ENCODE measurements at regions of chr2 and their contacts with region 1.

Region 1: GRCh38 chr2:56749152-56749752 is 565.5 kb downstream of the CCDC85A start:
- DNase-seq: no peak
- H3K4me3 ChIP-seq: no peak overlapping the region
- H3K27ac ChIP-seq: no peak overlapping the region
- H3K4me1 ChIP-seq: no peaks in the 10 kb centered on the region
- H3K27me3 ChIP-seq: no peaks in the 10 kb centered on the region
- CTCF ChIP-seq: peak; percentile 49 to 50

Region 2: DNA sequence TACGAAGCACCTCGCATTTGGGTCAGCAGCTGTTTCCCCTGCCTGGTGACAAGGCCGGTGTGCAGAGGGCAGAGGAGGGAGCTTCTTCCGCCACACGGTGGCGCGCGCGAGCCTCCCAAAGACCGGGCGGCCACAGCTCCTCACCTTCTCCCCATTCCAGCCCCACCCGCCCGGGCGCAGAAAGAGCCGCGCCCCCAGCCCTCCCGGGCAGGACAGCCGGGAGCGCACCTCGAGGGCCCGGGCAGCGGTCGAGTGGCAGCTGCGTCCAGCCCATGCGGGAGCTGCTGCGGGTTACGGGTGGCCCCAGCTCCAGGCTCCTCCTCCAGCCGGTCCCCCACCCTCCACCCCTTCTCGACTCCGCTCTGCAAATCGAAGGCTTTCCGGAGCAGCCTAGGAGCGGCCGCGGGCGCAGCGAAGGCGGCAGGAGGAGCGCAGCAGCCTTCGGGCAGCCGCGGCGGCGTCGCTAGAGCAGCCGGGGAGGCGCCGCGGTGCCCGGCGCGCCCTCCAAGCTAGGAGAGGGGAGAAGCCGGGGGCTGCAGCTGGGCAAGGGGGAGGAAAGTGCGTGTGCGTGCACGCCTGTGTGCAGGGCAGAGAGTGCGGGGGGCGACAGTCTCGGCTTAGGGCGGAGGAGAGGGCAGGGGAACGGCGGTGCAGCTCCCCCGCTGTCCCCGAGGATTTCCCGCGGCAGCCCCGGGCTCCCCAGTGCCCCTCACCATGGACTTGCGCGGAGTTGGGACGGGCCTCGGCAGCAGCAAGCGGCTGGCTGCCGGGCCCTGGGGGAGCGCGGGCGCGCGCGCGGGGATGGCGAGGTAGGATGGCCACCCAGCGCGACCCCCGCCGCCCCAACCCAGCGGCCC is 565.4 kb before region 1 on chr2 and contains the start of gene CCDC85A:
- intact Hi-C with region 1: loop called (anchors 5 kb)
- DNase-seq: peak; percentile 83 to 88
- H3K4me3 ChIP-seq: peak within 1 kb of the TSS; percentile 55 to 66
- H3K27ac ChIP-seq: peak within 1 kb of the TSS in 1 of 2 donors; percentile 23
- H3K4me1 ChIP-seq: peaks cover 0 to 29% (median 20%) of the 10 kb centered on the region in 4 donors
- H3K27me3 ChIP-seq: peaks cover 0 to 28% of the 10 kb centered on the region in 2 donors
- CTCF ChIP-seq: peak; percentile 85 to 94

Region 3: DNA sequence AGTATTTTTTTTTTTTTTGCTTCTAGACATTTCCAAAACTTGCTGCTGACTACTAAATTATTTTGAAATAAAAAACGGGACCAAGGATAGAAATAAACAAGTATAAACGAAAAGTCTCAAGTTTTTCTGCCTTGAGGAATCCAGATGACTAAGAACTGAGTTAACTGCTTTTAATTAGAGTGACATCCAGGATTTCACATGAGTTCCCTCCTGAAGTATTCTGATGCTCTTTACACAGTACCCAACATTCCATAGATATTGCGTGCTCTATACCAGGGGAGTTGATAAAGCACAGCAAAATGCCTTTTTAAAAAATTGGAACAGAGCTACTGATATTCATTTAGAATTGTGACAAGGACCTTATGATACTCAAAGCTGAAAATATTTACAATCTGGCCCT is 52.5 kb after region 1 on chr2:
- intact Hi-C with region 1: no loop called
- DNase-seq: no peak
- H3K4me3 ChIP-seq: no peak overlapping the region
- H3K27ac ChIP-seq: no peak overlapping the region
- H3K4me1 ChIP-seq: no peaks in the 10 kb centered on the region
- H3K27me3 ChIP-seq: no peaks in the 10 kb centered on the region
- CTCF ChIP-seq: no peak

Measured in tibial artery (tissue), 4 donors.